Activated CD4-positive, alpha-beta T cell treated with anti-CD3 and anti-CD28 coated beads, Interleukin-2, amount 10 ng/mL, durations not matched to agents 7 days and 5 days (primary cell): ENCODE measurements at regions of chr21 and their contacts with region 1.

Region 1: DNA sequence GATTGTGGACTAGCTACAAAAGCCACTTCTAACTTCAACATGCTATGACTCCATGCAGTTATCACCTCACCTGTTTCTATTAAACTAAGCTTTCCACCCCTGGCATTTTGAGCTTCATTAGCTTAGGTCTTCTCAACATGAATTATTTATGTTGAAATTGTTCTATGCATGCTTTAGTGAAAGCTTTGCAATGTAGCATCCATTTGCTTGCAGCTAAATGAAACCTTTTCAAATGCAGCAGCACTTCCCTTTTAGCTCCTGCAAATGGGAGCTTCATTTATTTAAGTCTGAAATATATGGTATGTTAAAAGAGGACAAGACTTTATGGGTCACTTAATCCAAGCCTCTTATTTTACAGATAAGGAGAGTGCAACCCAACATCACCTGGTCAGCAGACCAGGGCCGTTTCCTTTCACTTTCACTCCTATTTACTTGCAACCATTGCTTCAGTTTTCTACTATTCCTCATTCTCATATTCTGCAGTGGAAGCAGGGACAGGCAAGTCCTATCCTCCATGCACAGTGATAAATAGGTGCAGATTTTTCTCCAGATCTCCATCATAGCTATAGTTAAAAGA is 56.4 kb upstream of the SAMSN1 start:
- DNase-seq: no peak
- H3K4me3 Mint-ChIP-seq: peak overlapping the region; percentile 57
- H3K27ac Mint-ChIP-seq: peak overlapping the region; percentile 83
- H3K4me1 Mint-ChIP-seq: peaks cover 37% of the 10 kb centered on the region
- H3K27me3 Mint-ChIP-seq: no peaks in the 10 kb centered on the region

Region 2: GRCh38 chr21:14591882-14592281 is 10.6 kb before region 1 on chr21:
- CTCF ChIA-PET with region 1: interaction called, 19 read pairs
- POLR2A ChIA-PET with region 1: no interaction called
- DNase-seq: no peak
- H3K4me3 Mint-ChIP-seq: no peak overlapping the region
- H3K27ac Mint-ChIP-seq: peak overlapping the region; percentile 77
- H3K4me1 Mint-ChIP-seq: peaks cover 32% of the 10 kb centered on the region
- H3K27me3 Mint-ChIP-seq: no peaks in the 10 kb centered on the region

Region 3: DNA sequence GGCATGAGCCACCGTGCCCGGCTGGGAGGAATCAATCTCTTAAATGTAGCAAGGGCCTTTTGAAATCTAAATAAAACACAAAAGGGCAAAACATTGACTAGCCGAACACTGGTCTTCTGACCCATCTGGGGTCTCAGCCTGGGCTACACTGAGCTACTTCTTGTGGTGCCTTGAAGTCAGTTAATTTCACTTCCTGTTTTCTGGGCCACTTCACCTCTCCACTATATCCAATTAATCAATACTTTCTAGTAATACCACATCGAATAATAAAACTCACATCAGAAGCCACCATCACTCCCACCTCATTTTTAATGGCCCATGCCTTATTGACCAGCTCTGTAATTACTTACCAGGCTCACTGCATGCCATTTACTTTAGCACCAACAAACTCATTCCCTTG is 81.6 kb after region 1 on chr21:
- CTCF ChIA-PET with region 1: no interaction called
- POLR2A ChIA-PET with region 1: no interaction called
- DNase-seq: no peak
- H3K4me3 Mint-ChIP-seq: no peak overlapping the region
- H3K27ac Mint-ChIP-seq: no peak overlapping the region
- H3K4me1 Mint-ChIP-seq: peaks cover 30% of the 10 kb centered on the region
- H3K27me3 Mint-ChIP-seq: no peaks in the 10 kb centered on the region

Region 4: GRCh38 chr21:14889080-14889810 is 286.8 kb after region 1 on chr21:
- CTCF ChIA-PET with region 1: no interaction called
- POLR2A ChIA-PET with region 1: no interaction called
- DNase-seq: no peak
- H3K4me3 Mint-ChIP-seq: no peak overlapping the region
- H3K27ac Mint-ChIP-seq: no peak overlapping the region
- H3K4me1 Mint-ChIP-seq: no peaks in the 10 kb centered on the region
- H3K27me3 Mint-ChIP-seq: no peaks in the 10 kb centered on the region